ENCODE measurements at regions of chr19 and their contacts with region 1.

Region 1: GRCh38 chr19:8005534-8006256 is at the start of gene ELAVL1:
- DNase-seq: peak; percentile 53 to 94
- H3K4me3 ChIP-seq: peak within 1 kb of the TSS; percentile 63 to 89 (median 85)
- H3K27ac ChIP-seq: peak within 1 kb of the TSS; percentile 93; the same call in 1 of the 2 replicates
- H3K4me1 ChIP-seq: peaks cover 6 to 13% (median 9%) of the 10 kb centered on the region in 4 experiments
- H3K27me3 ChIP-seq: no peaks in the 10 kb centered on the region
- CTCF ChIP-seq: no peak
- EP300 ChIP-seq: no peak
- POLR2A ChIP-seq: peak; percentile 80 to 87
- RAD21 ChIP-seq: no peak
- total RNA-seq, gene ELAVL1: 163 and 167 TPM in 2 replicates

Region 2: DNA sequence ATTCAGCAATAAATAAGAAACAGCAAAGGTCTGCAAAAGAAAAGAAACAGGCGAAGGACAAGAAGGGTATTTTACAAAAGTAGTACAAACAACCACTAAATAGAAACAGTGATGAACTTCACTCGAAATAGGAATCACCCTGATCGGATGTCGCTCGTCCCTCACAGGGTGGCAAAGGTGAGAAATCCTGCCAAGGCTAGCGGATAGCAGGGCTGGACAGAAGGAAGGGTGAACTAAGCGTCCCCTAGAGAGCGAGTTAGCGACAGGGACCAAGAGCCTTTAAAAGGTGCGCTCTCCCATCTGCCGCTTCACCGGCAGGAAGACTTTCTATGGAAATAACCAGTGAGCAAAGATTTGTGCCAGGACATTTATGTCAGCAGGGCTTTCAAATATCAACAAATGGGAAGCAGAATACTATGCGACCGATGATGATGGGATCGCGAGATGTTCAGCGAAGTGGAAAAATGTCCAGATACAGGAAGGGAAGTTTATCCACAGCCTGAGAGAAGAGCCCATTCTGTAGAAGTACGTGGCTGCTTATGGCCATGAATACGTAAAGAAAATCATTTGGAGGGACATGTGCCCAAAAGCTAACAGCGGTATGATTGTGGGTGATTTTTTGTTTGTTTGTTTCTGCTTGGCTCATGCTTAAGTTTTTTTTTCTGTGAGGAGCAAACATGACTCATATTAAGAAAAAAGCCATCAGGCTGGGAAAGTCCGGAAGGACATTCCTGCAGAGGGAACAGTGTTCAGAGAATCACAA is 19.2 kb before region 1 on chr19:
- CTCF ChIA-PET with region 1: interaction called, 16 read pairs
- POLR2A ChIA-PET with region 1: interaction called, 3 read pairs
- DNase-seq: no peak
- H3K4me3 ChIP-seq: no peak overlapping the region
- H3K27ac ChIP-seq: no peak overlapping the region
- H3K4me1 ChIP-seq: no peaks in the 10 kb centered on the region
- H3K27me3 ChIP-seq: no peaks in the 10 kb centered on the region
- CTCF ChIP-seq: no peak
- EP300 ChIP-seq: no peak
- POLR2A ChIP-seq: no peak
- RAD21 ChIP-seq: no peak

Region 3: DNA sequence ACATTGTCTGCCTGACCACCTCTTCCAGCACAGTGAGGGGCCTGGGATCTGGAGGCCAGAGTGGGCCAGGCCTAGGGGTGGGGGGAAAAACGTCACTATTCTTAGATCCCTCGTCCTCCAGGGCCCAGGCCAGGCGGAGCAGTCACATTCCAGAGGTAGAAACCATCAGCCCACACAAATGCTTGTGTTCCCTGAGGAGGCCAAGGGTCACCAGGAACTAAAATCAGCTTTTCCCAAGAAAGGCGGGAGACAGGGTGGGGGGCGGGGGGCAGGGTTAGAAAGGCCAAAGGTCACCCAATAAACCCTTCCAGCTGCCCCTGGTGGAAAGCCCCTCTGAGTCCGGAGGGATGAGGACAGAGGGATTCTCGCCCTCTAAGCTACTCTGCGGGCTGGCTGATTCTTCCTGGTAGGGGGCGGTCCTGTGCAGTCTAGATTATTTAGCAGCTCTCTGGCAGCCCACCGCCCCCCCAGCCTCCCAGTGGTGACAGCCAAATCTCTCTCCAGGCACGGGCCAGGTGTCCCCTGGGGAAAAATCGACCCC is 23.3 kb after region 1 on chr19:
- CTCF ChIA-PET with region 1: interaction called, 18 read pairs
- POLR2A ChIA-PET with region 1: interaction called, 8 read pairs
- DNase-seq: peak in 1 of 2 experiments; percentile 65
- H3K4me3 ChIP-seq: no peak overlapping the region
- H3K27ac ChIP-seq: no peak overlapping the region
- H3K4me1 ChIP-seq: peaks cover 4 to 17% (median 9%) of the 10 kb centered on the region in 4 experiments
- H3K27me3 ChIP-seq: no peaks in the 10 kb centered on the region
- CTCF ChIP-seq: peak; percentile 5 to 28 (median 9); a peak in 3 of 4 replicates
- EP300 ChIP-seq: 0 out of 3 replicates have a peak, but pooled peaks of 1 of the 2 experiments have one; percentile 47
- POLR2A ChIP-seq: no peak
- RAD21 ChIP-seq: peak in 1 of 2 experiments; percentile 37; a peak in 2 of 4 replicates